T-cell (primary cell): ENCODE measurements at regions of chr4 and their contacts with region 1.

Region 1: GRCh38 chr4:16205298-16206164 is 20.7 kb downstream of the TAPT1 start:
- DNase-seq: peak in 1 of 35 experiments; percentile 51
- ATAC-seq: peak; percentile 67 to 83 (median 79)
- H3K4me3 ChIP-seq: no peak overlapping the region
- H3K4me3 Mint-ChIP-seq: no peak overlapping the region
- H3K27ac ChIP-seq: no peak overlapping the region
- H3K27ac Mint-ChIP-seq: peak overlapping the region in 1 of 2 donors; percentile 33
- H3K4me1 ChIP-seq: peaks cover 0 to 6% of the 10 kb centered on the region in 2 experiments
- H3K4me1 Mint-ChIP-seq: peaks cover 45 to 56% (median 46%) of the 10 kb centered on the region in 3 donors
- H3K27me3 ChIP-seq: no peaks in the 10 kb centered on the region
- H3K27me3 Mint-ChIP-seq: no peaks in the 10 kb centered on the region

Region 2: DNA sequence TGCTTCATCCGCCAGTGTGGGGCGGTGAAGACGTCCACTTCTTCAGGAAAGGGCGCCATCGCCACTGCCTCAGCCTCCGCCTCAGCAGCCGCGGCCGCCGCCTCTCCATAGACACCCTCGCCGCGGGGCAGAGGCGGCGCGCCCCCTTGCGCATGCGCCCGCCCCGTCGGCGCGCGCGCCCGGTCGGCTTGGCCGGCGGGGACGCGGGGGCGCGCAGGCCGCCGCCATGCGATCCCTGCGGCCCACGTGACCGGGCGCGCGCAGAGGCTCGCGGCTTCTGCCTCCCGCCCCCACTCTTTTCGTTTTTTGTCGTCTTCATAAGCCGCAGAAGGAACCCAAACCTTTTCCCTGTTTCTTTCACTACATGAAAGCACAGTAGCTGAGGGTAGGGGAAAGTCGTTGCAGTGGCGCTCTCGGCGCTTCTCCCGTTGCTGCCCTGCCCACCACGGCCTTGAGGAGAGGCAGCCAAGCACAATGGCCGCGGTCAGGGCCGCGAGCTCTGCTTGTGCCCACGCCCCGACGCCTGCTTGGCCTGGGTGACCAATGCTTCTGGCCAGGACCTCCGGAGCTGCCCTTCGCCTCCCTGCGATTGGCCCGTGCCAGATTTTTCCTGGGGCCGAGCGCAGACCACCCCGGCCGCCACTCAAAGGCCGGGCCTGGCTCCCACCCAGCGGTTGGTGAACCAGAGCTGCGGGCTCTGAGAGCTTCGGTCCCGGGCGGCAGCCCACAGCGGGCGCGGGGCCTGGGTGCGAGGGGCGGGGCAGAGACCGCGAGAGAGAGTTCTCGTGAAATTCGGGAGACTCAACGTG is 550.1 kb before region 1 on chr4 and contains the start of gene FBXL5:
- CTCF ChIA-PET with region 1: interaction called in 1 of 2 experiments, 10 read pairs
- POLR2A ChIA-PET with region 1: no interaction called
- DNase-seq: peak; percentile 68 to 95 (median 77)
- ATAC-seq: peak; percentile 85 to 86 (median 85)
- H3K4me3 ChIP-seq: peak within 1 kb of the TSS; percentile 76 to 95
- H3K4me3 Mint-ChIP-seq: peak within 1 kb of the TSS; percentile 96 to 99 (median 98)
- H3K27ac ChIP-seq: peak within 1 kb of the TSS; percentile 98
- H3K27ac Mint-ChIP-seq: peak within 1 kb of the TSS; percentile 98
- H3K4me1 ChIP-seq: peaks cover 19 to 26% of the 10 kb centered on the region in 2 experiments
- H3K4me1 Mint-ChIP-seq: peaks cover 41 to 43% (median 41%) of the 10 kb centered on the region in 3 donors
- H3K27me3 ChIP-seq: no peaks in the 10 kb centered on the region
- H3K27me3 Mint-ChIP-seq: no peaks in the 10 kb centered on the region
- total RNA-seq, gene FBXL5: 40.2 to 64.6 (median 45.0) TPM

Region 3: GRCh38 chr4:16217300-16218051 is 11.9 kb after region 1 on chr4:
- CTCF ChIA-PET with region 1: interaction called, 6 to 14 read pairs
- POLR2A ChIA-PET with region 1: interaction called in 1 of 2 experiments, 3 read pairs
- DNase-seq: no peak
- ATAC-seq: peak in 1 of 4 experiments; percentile 67
- H3K4me3 ChIP-seq: no peak overlapping the region
- H3K4me3 Mint-ChIP-seq: peak overlapping the region in 2 of 3 donors; percentile 23 to 50
- H3K27ac ChIP-seq: no peak overlapping the region
- H3K27ac Mint-ChIP-seq: peak overlapping the region; percentile 59 to 63
- H3K4me1 ChIP-seq: peaks cover 12 to 22% of the 10 kb centered on the region in 2 experiments
- H3K4me1 Mint-ChIP-seq: peaks cover 79 to 80% (median 80%) of the 10 kb centered on the region in 3 donors
- H3K27me3 ChIP-seq: no peaks in the 10 kb centered on the region
- H3K27me3 Mint-ChIP-seq: no peaks in the 10 kb centered on the region

Region 4: DNA sequence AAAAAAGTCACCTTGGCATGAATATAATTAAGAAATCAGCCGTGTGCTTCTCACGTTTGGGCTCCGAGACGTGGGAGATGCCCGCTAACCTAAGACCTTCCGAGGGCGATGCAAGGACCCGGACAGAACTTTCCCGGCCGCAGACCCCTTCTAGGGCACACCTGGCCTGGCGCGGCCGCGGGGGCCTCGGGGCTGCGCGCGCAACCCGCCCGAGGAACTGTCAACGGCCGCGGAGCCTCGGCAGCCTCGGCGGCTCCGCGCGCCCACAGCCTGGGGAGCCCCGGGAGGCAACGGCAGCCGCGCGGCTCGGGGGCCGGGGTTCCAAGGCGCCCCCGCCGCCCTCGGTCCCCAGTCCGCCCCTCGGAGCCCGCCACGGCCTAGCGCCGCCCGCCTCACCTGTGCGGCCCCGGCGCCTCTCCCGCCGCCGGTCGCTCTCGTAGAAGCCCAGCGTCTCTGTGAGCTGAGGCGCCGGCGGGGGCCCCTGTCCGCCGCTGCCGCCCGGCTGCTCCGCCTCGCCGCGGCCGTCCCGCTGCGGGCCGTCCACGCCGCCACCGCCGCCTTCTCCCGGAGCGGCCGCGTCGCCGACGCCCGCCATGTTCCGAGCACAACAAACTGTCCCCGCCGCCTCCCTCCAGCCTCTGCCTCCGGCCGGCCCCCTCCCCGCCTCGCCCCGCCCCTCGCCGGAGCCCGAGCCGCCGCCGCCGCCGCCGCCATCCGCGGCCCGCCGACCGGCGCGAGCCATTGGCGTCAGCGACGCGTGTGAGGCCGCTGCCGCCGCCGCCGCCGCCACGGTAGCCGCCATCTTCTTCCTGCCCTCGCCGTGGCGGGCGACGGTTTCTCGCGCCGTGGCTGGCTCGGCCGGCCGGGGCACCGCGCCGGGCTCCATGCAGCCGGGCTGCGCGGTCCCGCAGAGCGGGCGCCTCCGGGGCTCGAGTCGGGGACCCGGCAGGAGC is 20.6 kb after region 1 on chr4 and contains the start of gene TAPT1:
- CTCF ChIA-PET with region 1: interaction called, 7 to 18 read pairs
- POLR2A ChIA-PET with region 1: interaction called in 1 of 2 experiments, 4 read pairs
- DNase-seq: peak; percentile 23 to 85 (median 55)
- ATAC-seq: peak; percentile 74 to 79 (median 76)
- H3K4me3 ChIP-seq: peak within 1 kb of the TSS; percentile 69 to 88
- H3K4me3 Mint-ChIP-seq: peak within 1 kb of the TSS; percentile 92 to 96 (median 94)
- H3K27ac ChIP-seq: peak within 1 kb of the TSS; percentile 78
- H3K27ac Mint-ChIP-seq: peak within 1 kb of the TSS; percentile 96 to 97
- H3K4me1 ChIP-seq: peaks cover 21 to 25% of the 10 kb centered on the region in 2 experiments
- H3K4me1 Mint-ChIP-seq: peaks cover 55 to 56% (median 56%) of the 10 kb centered on the region in 3 donors
- H3K27me3 ChIP-seq: no peaks in the 10 kb centered on the region
- H3K27me3 Mint-ChIP-seq: no peaks in the 10 kb centered on the region
- total RNA-seq, gene TAPT1: 41.1 to 77.9 (median 50.3) TPM

Region 5: DNA sequence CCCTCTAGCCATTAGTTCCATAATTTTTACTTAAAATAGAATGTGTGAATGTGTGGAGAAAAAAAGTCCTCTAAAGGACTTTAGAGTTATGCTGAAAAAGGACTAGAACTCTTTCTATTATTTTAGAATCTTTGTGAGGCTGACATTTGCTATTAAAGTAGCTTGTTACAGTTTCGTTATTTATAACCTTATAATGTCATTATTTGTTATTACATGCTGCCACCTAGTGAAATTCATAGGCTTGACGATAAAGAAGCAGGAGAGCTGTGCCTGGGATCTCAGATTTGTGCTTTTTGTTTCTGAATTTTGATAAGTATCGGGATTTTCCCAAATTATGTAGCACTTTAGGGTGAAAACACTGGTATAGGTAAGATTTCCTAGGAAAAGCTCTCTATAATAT is 59.3 kb after region 1 on chr4:
- CTCF ChIA-PET with region 1: interaction called, 7 to 12 read pairs
- POLR2A ChIA-PET with region 1: no interaction called
- DNase-seq: peak in 1 of 35 experiments; percentile 66
- ATAC-seq: peak in 2 of 4 experiments; percentile 50 to 56
- H3K4me3 ChIP-seq: no peak overlapping the region
- H3K4me3 Mint-ChIP-seq: no peak overlapping the region
- H3K27ac ChIP-seq: no peak overlapping the region
- H3K27ac Mint-ChIP-seq: no peak overlapping the region
- H3K4me1 ChIP-seq: peaks cover 0 to 2% of the 10 kb centered on the region in 2 experiments
- H3K4me1 Mint-ChIP-seq: peaks cover 5 to 15% (median 10%) of the 10 kb centered on the region in 3 donors
- H3K27me3 ChIP-seq: no peaks in the 10 kb centered on the region
- H3K27me3 Mint-ChIP-seq: no peaks in the 10 kb centered on the region